OCI-LY7 (cell line): ENCODE measurements at regions of chr15 and their contacts with region 1.

Region 1: GRCh38 chr15:52528991-52529926 is 579 bp upstream of the MYO5A start:
- DNase-seq: peak; percentile 91
- H3K4me3 ChIP-seq: peak overlapping the region; percentile 95
- H3K27ac ChIP-seq: peak overlapping the region; percentile 76
- H3K4me1 ChIP-seq: peaks cover 22% of the 10 kb centered on the region
- CTCF ChIP-seq: peak; percentile 27; the same call in 1 of the 2 replicates

Region 2: GRCh38 chr15:52362502-52362901 is 166.8 kb before region 1 on chr15:
- CTCF ChIA-PET with region 1: no interaction called
- POLR2A ChIA-PET with region 1: no interaction called
- intact Hi-C with region 1: loop called (anchors 10 kb)
- DNase-seq: no peak
- H3K4me3 ChIP-seq: no peak overlapping the region
- H3K27ac ChIP-seq: no peak overlapping the region
- H3K4me1 ChIP-seq: no peaks in the 10 kb centered on the region
- CTCF ChIP-seq: no peak

Region 3: DNA sequence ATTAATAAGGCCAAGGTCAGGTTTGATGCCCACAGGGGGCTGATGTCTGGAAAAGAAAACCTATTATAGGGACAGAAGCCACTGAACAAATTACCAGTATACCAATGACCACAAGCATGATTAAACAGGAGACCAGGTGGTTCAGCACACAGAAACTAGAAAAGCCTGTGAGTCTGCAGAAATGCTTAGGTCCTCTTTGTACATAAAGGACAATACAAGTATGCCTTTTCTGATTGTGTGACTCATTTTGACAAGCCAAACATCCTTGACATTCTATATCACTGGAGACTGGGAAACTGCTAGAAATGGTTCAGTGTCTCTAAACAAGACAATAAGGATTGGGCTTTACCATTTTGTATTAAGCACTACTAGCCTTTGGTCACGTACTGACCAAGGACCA is 120.4 kb before region 1 on chr15:
- CTCF ChIA-PET with region 1: no interaction called
- POLR2A ChIA-PET with region 1: no interaction called
- intact Hi-C with region 1: loop called (anchors 5 kb)
- DNase-seq: no peak
- H3K4me3 ChIP-seq: no peak overlapping the region
- H3K27ac ChIP-seq: no peak overlapping the region
- H3K4me1 ChIP-seq: no peaks in the 10 kb centered on the region
- CTCF ChIP-seq: no peak

Region 4: DNA sequence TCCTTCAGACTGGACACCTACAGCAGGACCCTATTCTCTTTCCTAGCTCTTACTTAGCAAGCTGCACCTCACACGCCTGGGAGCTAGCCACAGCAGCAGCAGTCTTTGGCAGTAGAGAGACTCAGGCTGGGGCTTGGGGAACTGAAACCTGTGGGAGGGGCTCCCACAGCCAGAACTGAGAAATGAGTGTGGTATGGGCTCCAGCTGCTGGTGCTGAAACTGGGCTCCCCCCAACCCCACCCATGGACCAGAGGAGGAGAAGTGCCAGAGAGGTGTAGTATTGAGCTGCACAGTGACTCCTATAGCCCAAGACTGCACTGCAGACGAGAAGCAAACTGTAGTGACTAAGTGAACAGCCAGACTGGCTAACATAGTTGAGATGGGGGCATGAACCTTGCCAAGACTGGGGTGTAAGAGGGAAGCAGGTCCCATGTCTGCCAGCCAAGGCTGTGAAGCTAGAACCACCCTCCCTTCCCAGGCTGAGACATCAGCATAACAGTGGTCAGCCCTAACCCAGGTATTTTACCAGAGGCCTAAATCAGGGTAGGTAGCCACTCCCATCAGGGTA is 63.0 kb before region 1 on chr15:
- CTCF ChIA-PET with region 1: interaction called, 3 read pairs
- POLR2A ChIA-PET with region 1: interaction called, 4 read pairs
- intact Hi-C with region 1: loop called (anchors 1 kb)
- DNase-seq: peak; percentile 97
- H3K4me3 ChIP-seq: peak overlapping the region; percentile 51
- H3K27ac ChIP-seq: peak overlapping the region; percentile 81
- H3K4me1 ChIP-seq: peaks cover 53% of the 10 kb centered on the region
- CTCF ChIP-seq: peak; percentile 78

Region 5: DNA sequence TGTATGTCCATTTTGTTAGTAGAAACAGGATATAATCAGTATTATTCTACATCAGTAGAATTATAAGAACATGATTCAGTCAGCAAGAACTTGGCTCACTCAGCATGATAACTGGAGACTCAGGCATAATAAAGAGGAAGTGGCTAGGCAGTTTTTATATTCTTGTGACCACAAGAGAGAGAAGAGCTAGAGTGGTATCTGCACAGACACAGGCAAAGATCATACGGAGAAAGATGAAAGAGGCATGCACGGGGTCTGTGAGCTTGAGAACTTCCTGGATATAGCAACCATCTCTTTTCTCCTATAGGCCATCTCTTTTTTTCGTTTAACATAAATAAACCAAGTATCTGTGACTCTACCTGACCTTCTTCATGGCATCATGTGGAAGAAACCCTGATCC is 47.3 kb before region 1 on chr15:
- CTCF ChIA-PET with region 1: no interaction called
- POLR2A ChIA-PET with region 1: interaction called, 5 read pairs
- intact Hi-C with region 1: loop called (anchors 1 kb)
- DNase-seq: peak; percentile 94
- H3K4me3 ChIP-seq: peak overlapping the region; percentile 55
- H3K27ac ChIP-seq: peak overlapping the region; percentile 93
- H3K4me1 ChIP-seq: peaks cover 57% of the 10 kb centered on the region
- CTCF ChIP-seq: no peak

Region 6: DNA sequence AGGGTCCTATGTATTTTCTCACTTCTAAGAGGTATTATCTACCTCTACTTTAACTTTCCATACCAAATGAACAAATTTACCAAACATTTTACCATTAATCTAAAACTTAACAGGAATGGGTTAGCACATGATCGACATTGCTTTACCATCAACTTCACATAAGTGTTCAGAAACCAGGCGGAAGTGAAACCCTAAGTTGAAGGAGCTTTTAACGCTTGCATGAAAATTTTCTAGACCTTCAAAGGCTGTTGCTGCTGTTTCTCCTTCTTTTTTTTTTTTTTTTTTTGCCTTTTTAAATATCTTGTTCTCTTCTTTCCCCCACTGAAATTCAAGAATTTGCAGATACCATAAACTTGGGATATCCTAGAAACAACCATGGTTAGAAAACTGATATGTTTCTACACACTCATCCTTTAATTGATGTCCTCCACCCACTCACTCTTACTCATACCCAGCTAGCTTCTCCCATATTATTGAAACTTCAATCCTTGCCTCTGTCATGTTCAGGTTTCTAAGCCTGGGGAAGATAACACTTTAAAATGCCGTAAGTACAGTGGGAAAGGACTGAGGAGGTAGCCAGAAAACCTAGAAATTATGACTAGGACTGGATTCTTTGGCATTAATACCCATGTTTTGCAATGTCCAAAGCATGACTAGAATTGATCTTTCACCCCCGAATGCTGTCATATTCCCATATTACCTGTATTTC is 25.3 kb before region 1 on chr15:
- CTCF ChIA-PET with region 1: interaction called, 3 read pairs
- POLR2A ChIA-PET with region 1: interaction called, 18 read pairs
- intact Hi-C with region 1: no loop called
- DNase-seq: peak; percentile 92
- H3K4me3 ChIP-seq: peak overlapping the region; percentile 55
- H3K27ac ChIP-seq: peak overlapping the region; percentile 94
- H3K4me1 ChIP-seq: peaks cover 70% of the 10 kb centered on the region
- CTCF ChIP-seq: no peak

Region 7: DNA sequence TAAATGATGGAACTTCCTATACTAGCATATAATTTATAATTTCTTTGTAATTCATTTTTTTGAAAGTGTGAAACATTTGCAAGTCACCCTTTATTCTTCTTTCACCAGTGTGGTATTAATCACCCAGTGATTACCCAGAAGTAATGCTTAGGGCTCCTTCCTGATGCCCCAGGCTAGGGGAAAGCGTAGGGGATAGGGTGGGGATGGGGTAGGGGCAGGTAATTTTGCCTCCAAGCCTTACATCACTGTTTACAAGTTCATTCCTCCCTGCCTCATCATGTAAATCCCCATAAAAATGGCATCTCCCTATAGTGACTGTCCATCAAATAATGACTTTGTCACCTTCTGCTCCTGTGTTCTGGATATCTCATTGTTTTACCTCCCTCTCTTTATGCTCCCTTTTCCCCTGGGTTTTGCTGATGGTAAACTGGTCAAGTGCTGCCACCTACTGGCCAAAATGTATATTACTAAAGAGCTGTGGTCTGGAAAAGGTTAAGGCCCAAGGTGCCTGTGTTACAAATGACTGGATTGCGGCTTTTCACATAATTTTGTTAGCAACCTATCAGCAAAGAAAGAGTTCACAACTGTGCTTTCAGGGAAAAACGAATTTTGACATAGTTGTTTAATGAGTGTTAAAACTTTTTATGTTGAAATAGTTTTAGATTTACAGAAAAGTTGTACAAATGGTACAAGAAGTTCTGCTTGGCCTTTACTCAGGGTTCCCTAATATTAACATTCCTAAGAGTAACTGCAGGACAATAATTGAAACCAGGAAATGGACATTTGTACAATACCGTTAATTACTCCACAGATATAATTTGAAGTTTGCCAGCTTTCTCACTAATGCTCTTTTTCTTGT is 206.2 kb after region 1 on chr15:
- CTCF ChIA-PET with region 1: no interaction called
- POLR2A ChIA-PET with region 1: interaction called, 3 read pairs
- intact Hi-C with region 1: loop called (anchors 2 kb)
- DNase-seq: peak; percentile 86
- H3K4me3 ChIP-seq: no peak overlapping the region
- H3K27ac ChIP-seq: no peak overlapping the region
- H3K4me1 ChIP-seq: peaks cover 31% of the 10 kb centered on the region
- CTCF ChIP-seq: peak; percentile 98

Region 8: DNA sequence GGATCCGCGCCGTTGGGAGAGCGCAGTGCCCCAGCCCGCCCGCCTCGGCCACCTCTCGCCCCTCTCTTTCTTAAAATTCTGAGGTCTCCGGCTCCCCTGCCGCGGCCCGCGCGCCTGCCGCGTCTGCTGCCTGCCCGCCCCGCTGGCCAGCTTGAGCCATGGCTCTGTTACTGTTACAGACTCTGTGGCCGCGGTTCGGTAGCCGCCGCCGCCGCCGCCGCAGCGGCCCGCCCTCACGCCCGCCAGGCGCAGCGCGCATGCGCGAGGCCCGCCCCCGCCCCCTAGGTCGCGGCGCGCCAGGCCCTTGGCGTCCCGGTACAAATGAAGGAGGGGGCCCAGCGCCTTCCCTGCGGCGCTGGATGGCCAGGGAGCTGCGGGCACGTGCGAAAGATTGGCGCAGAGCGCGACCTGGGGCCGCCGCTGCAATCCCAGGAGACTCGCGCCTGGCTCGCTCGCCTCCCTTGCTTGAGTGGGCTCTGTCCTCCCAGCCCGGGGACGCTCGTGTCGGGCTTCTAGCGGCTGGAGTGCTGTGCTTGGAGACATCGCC is 261.0 kb after region 1 on chr15 and contains the start of gene ONECUT1:
- CTCF ChIA-PET with region 1: no interaction called
- POLR2A ChIA-PET with region 1: no interaction called
- intact Hi-C with region 1: no loop called
- DNase-seq: peak; percentile 61
- H3K4me3 ChIP-seq: peak within 1 kb of the TSS; percentile 65
- H3K27ac ChIP-seq: no peak within 1 kb of the TSS
- H3K4me1 ChIP-seq: no peaks in the 10 kb centered on the region
- CTCF ChIP-seq: no peak
- total RNA-seq, gene ONECUT1: 0.25 and 0.28 TPM in 2 replicates

Region 9: DNA sequence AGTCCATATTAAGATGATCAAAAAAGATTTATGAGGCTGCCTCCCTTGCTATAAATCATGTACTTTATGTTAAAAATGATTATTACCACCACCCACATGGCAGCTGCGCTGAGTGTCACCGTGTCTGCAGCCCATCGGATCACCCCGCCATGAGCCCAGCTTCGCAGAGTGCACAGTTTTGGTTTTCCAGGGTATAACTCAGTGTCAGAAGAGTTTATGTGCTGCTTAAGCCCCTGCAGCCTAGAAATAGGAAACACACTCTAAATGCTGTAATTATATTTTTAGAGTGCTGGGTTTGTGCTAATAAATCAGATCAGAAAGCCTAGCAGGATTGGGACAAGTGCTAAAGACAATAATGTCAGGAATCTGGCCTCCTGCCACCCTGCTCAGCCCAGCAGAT is 315.6 kb after region 1 on chr15:
- CTCF ChIA-PET with region 1: no interaction called
- POLR2A ChIA-PET with region 1: no interaction called
- intact Hi-C with region 1: no loop called
- DNase-seq: no peak
- H3K4me3 ChIP-seq: no peak overlapping the region
- H3K27ac ChIP-seq: no peak overlapping the region
- H3K4me1 ChIP-seq: no peaks in the 10 kb centered on the region
- CTCF ChIP-seq: no peak